ENCODE measurements at regions of chr11 and their contacts with region 1.

Region 1: DNA sequence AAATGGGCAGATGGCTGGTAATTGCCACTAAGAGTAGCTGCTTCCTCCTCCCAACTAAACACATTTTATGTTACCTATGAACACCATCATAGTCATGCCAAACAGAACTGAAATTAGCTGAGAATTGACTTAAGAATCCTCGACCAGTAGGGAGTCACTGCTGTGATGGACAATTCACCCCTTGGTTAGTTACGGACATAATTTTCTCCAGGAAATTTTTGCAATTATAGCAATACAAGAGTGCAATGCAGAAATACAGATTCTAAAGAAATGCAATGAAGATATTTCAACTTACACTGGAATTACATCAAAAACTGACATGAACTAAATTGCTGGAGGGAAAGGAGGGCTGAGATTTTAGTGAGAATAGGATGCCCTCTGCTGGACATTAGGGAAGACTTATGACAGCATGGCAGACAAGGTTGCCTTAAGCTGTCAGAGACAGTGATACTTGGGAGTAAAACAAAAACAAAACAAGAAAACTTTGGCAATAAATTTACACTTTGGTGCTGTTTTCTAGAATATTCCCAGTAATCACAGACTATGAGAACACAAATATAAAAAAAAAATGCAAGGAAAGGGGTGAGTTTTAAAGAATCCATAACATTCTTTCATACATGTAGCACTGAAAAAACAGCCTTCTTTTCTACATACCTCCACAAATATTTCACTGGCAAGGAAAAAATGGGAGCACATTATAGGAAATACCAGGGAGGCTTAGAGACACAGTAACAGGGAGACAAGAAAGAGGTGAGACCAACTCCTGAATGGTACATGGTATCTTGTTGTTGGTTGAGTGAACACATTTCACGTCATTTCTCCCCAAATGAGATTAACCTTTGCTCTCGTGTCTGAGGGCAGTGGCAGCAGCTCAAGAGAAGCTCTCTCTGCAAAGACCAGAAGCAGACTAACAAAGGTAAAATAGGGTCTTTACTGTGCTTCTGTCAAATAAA is 11.2 kb upstream of the PPP2R1B start:
- DNase-seq: no peak
- ATAC-seq: peak; percentile 84 to 88

Region 2: DNA sequence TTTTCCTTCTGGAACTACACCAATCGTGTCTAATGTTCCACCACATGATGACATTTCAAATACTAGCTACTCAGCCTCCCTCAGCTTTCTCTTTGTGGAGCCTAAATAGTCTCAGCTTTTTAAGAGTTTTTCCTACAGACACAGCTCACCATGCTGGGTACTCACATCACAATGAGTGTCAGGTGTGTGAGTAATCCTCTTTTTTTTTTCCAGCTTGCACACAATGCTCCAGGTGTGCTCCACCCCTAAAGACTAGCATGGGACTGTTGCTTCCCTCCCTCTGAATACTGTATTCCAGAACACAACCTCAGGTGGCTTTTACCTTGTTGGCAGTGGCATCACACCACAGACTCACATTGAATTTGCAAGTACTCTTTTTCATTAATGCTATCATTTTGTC is 276.9 kb before region 1 on chr11:
- intact Hi-C with region 1: no loop called
- DNase-seq: no peak
- ATAC-seq: no peak

Region 3: GRCh38 chr11:111601979-111602864 is 175.1 kb before region 1 on chr11 and contains the start of gene SIK2:
- intact Hi-C with region 1: loop called (anchors 1 to 5 kb)
- DNase-seq: peak; percentile 97
- ATAC-seq: peak; percentile 95 to 97
- total RNA-seq, gene SIK2: 24.3 to 51.6 TPM

Region 4: DNA sequence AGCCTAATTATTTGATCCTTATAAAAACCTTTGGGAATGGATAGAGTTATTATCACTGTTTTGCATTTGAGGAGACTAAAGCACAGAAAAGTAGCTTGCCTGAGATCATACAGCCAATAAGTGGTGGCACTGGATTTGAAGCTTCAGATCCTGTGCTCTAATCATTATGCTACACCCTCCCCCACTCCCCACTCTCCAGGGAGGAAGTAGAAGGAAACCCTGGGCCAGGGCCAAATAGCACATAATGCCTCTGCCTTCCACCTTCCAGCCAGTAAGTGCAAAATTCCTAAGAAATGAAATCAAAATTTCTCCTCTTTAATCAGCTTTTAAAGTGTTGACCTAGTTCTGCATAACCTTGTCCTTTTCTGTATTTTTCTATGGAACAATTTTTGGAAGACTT is 113.5 kb before region 1 on chr11:
- intact Hi-C with region 1: no loop called
- DNase-seq: peak; percentile 70
- ATAC-seq: peak; percentile 75 to 83

Region 5: GRCh38 chr11:111833524-111833923 is 56.2 kb after region 1 on chr11:
- intact Hi-C with region 1: loop called in 1 of 2 experiments (anchors 5 kb)
- DNase-seq: no peak
- ATAC-seq: peak in 1 of 2 donors; percentile 71

Measured in left cardiac atrium (tissue), 4 donors.